MCF 10A (cell line): ENCODE measurements at regions of chr4 and their contacts with region 1.

Region 1: GRCh38 chr4:47383829-47384427 is 79.6 kb downstream of the COMMD8 start:
- DNase-seq: peak; percentile 45
- H3K4me3 Mint-ChIP-seq: no peak overlapping the region
- H3K27ac Mint-ChIP-seq: no peak overlapping the region
- H3K4me1 Mint-ChIP-seq: no peaks in the 10 kb centered on the region
- H3K27me3 Mint-ChIP-seq: peaks cover 39% of the 10 kb centered on the region
- CTCF ChIP-seq: peak; percentile 48

Region 2: GRCh38 chr4:46931981-46932380 is 451.9 kb before region 1 on chr4:
- CTCF ChIA-PET with region 1: interaction called, 3 read pairs
- POLR2A ChIA-PET with region 1: no interaction called
- intact Hi-C with region 1: loop called (anchors 1 kb)
- DNase-seq: peak; percentile 59
- H3K4me3 Mint-ChIP-seq: no peak overlapping the region
- H3K27ac Mint-ChIP-seq: no peak overlapping the region
- H3K4me1 Mint-ChIP-seq: no peaks in the 10 kb centered on the region
- H3K27me3 Mint-ChIP-seq: peaks cover 93% of the 10 kb centered on the region
- CTCF ChIP-seq: peak; percentile 49

Region 3: GRCh38 chr4:46937493-46937892 is 446.4 kb before region 1 on chr4:
- CTCF ChIA-PET with region 1: no interaction called
- POLR2A ChIA-PET with region 1: no interaction called
- intact Hi-C with region 1: loop called (anchors 1 kb)
- DNase-seq: peak; percentile 22
- H3K4me3 Mint-ChIP-seq: no peak overlapping the region
- H3K27ac Mint-ChIP-seq: no peak overlapping the region
- H3K4me1 Mint-ChIP-seq: no peaks in the 10 kb centered on the region
- H3K27me3 Mint-ChIP-seq: peaks cover 77% of the 10 kb centered on the region
- CTCF ChIP-seq: no peak

Region 4: GRCh38 chr4:47650584-47651130 is 266.7 kb after region 1 on chr4:
- CTCF ChIA-PET with region 1: no interaction called
- POLR2A ChIA-PET with region 1: no interaction called
- intact Hi-C with region 1: no loop called
- DNase-seq: peak; percentile 20
- H3K4me3 Mint-ChIP-seq: no peak overlapping the region
- H3K27ac Mint-ChIP-seq: no peak overlapping the region
- H3K4me1 Mint-ChIP-seq: peaks cover 5% of the 10 kb centered on the region
- H3K27me3 Mint-ChIP-seq: no peaks in the 10 kb centered on the region
- CTCF ChIP-seq: no peak